Activated CD4-positive, alpha-beta T cell treated with anti-CD3 and anti-CD28 coated beads for 36 hours (primary cell): ENCODE measurements at regions of chr16 and their contacts with region 1.

Region 1: GRCh38 chr16:21300309-21301167 is 22.4 kb upstream of the CRYM start:
- DNase-seq: peak; percentile 81
- ATAC-seq: peak; percentile 77
- H3K4me3 Mint-ChIP-seq: peak overlapping the region; percentile 85
- H3K27ac Mint-ChIP-seq: peak overlapping the region; percentile 81
- H3K4me1 Mint-ChIP-seq: peaks cover 25% of the 10 kb centered on the region
- H3K27me3 Mint-ChIP-seq: peaks cover 22% of the 10 kb centered on the region

Region 2: GRCh38 chr16:20944861-20945574 is 355.5 kb before region 1 on chr16:
- CTCF ChIA-PET with region 1: no interaction called
- POLR2A ChIA-PET with region 1: no interaction called
- intact Hi-C with region 1: loop called in 1 of 2 experiments (anchors 5 kb)
- DNase-seq: peak; percentile 78
- ATAC-seq: peak; percentile 78
- H3K4me3 Mint-ChIP-seq: no peak overlapping the region
- H3K27ac Mint-ChIP-seq: peak overlapping the region; percentile 55
- H3K4me1 Mint-ChIP-seq: peaks cover 33% of the 10 kb centered on the region
- H3K27me3 Mint-ChIP-seq: no peaks in the 10 kb centered on the region

Region 3: GRCh38 chr16:21158208-21159110 is 142.1 kb before region 1 on chr16 and contains the start of gene LDAF1:
- CTCF ChIA-PET with region 1: interaction called, 9 read pairs
- POLR2A ChIA-PET with region 1: no interaction called
- intact Hi-C with region 1: loop called (anchors 1 to 5 kb)
- DNase-seq: peak; percentile 90
- ATAC-seq: peak; percentile 99
- H3K4me3 Mint-ChIP-seq: peak within 1 kb of the TSS; percentile 88
- H3K27ac Mint-ChIP-seq: peak within 1 kb of the TSS; percentile 81
- H3K4me1 Mint-ChIP-seq: peaks cover 20% of the 10 kb centered on the region
- H3K27me3 Mint-ChIP-seq: no peaks in the 10 kb centered on the region
- total RNA-seq, gene LDAF1: 7.2 to 11.7 TPM

Region 4: DNA sequence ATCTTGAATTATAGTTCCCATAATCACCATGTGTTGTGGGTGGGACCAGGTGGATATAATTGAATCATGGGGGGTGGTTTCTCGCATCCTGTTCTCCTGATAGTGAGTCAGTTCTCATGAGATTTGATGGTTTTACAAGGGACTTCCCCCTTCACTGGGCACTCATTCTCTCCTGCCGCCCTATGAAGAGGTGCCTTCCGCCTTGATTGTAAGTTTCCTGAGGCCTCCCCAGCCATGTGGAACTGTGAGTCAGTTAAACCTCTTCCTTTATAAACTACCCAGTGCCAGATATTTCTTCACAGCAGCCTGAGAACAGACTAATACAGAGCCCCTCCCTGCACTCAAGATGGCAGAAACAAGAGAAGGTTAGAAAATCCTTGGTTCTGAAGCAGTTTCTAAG is 115.7 kb before region 1 on chr16:
- CTCF ChIA-PET with region 1: interaction called, 8 read pairs
- POLR2A ChIA-PET with region 1: no interaction called
- intact Hi-C with region 1: loop called (anchors 1 kb)
- DNase-seq: peak; percentile 50
- ATAC-seq: peak; percentile 81
- H3K4me3 Mint-ChIP-seq: no peak overlapping the region
- H3K27ac Mint-ChIP-seq: peak overlapping the region; percentile 44
- H3K4me1 Mint-ChIP-seq: peaks cover 28% of the 10 kb centered on the region
- H3K27me3 Mint-ChIP-seq: peaks cover 3% of the 10 kb centered on the region

Region 5: GRCh38 chr16:21233521-21234150 is 66.9 kb before region 1 on chr16 and contains the start of gene ANKS4B:
- CTCF ChIA-PET with region 1: no interaction called
- POLR2A ChIA-PET with region 1: no interaction called
- intact Hi-C with region 1: no loop called
- DNase-seq: no peak
- ATAC-seq: no peak
- H3K4me3 Mint-ChIP-seq: no peak within 1 kb of the TSS
- H3K27ac Mint-ChIP-seq: no peak within 1 kb of the TSS
- H3K4me1 Mint-ChIP-seq: no peaks in the 10 kb centered on the region
- H3K27me3 Mint-ChIP-seq: peaks cover 31% of the 10 kb centered on the region
- total RNA-seq, gene ANKS4B: not detected

Region 6: GRCh38 chr16:21277927-21278706 is 22.4 kb before region 1 on chr16 and contains the start of gene CRYM:
- CTCF ChIA-PET with region 1: interaction called, 8 read pairs
- POLR2A ChIA-PET with region 1: no interaction called
- intact Hi-C with region 1: loop called in 1 of 2 experiments (anchors 1 kb)
- DNase-seq: peak; percentile 80
- ATAC-seq: peak; percentile 96
- H3K4me3 Mint-ChIP-seq: no peak within 1 kb of the TSS
- H3K27ac Mint-ChIP-seq: no peak within 1 kb of the TSS
- H3K4me1 Mint-ChIP-seq: no peaks in the 10 kb centered on the region
- H3K27me3 Mint-ChIP-seq: peaks cover 61% of the 10 kb centered on the region
- total RNA-seq, gene CRYM: not detected